ENCODE measurements at regions of chr7 and their contacts with region 1.

Region 1: GRCh38 chr7:106153891-106154449 is 41.9 kb upstream of the SYPL1 start:
- DNase-seq: peak; percentile 82 to 99 (median 90)

Region 2: DNA sequence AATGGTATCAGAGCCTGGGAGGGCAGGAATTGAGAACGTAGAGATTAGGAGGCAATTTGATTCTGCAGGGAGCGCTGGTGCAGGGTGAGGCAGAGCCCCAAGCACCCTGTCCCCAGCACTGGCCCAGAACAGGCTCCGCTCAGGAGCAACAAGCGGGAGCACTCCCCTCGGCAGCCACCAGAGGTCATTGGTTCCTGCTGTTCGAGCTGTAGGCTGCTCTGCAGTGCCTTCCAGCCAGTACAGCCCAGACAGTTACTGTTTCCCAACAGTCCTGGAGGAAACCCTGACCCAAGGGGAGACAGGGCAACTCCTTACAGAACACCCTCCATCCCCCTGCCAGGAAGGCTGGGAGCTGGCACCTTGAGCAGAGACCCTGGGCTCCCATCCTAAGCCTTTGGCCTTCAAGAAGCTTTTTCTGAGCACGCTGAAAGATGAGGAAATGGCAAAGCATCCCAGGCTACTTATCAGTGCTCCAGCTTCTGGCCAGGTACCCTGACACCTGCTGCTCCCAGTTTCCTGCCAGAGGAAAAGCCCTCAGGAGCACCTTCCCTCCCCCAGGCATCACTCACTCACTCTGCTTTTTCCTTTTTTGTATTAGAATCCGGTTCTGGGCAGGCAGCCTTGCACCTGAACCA is 501.5 kb before region 1 on chr7:
- intact Hi-C with region 1: loop called (anchors 10 kb)
- DNase-seq: peak; percentile 71 to 98 (median 86)

Region 3: GRCh38 chr7:105759670-105760550 is 394.1 kb before region 1 on chr7:
- intact Hi-C with region 1: loop called (anchors 10 kb)
- DNase-seq: peak in 5 of 10 donors; percentile 45 to 86 (median 61)

Region 4: GRCh38 chr7:105876091-105876963 is 277.6 kb before region 1 on chr7 and contains the start of gene ATXN7L1:
- intact Hi-C with region 1: loop called (anchors 5 kb)
- DNase-seq: peak; percentile 85 to 99 (median 92)

Region 5: GRCh38 chr7:105924945-105925344 is 229.0 kb before region 1 on chr7:
- intact Hi-C with region 1: no loop called
- DNase-seq: no peak

Region 6: DNA sequence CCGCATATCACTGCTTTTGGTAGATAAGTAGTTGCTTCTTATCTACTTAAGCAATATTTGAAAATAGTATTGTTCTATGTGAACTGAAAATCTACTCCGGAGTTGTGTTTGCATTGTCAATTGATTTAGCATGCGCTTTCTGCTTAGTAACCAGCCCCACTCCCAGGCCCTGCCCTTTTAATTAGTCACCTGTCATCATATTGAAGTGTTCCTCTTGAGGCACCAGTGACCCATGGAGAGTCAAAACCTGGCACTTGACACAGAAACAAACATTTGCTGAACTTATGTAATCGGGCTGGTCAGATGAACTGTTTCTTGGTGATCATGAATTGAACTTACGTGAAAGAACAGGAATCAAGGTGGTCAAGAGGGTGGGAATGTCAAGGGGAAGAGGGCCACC is 218.7 kb before region 1 on chr7:
- intact Hi-C with region 1: no loop called
- DNase-seq: no peak

Region 7: GRCh38 chr7:106056513-106057203 is 97.3 kb before region 1 on chr7:
- intact Hi-C with region 1: loop called (anchors 1 kb)
- DNase-seq: peak; percentile 54 to 97 (median 78)